Heart left ventricle (tissue), 16 donors: ENCODE measurements at regions of chr22 and their contacts with region 1.

Region 1: DNA sequence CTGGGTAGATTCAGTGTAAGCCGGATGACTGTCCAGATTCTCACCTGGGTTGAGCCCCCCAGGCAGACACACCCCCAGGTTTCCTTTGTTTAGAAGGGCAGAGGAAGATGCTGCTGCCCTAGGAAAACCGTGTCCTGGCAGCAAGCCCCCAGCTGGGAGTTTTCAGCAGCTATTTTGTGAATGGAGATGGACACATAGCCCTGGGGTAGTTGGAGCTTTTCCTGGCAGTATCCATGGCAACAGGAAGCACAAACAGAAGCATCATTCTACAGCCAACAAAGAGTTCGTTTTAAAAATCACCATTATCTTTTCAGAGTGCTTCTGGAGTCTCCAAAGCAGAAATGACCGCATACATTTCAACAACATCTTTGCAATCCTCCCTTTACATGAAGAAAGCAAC is 245.5 kb downstream of the BRD1 start:
- DNase-seq: no peak
- ATAC-seq: no peak
- H3K4me3 ChIP-seq: no peak overlapping the region
- H3K27ac ChIP-seq: no peak overlapping the region
- H3K4me1 ChIP-seq: no peaks in the 10 kb centered on the region
- H3K27me3 ChIP-seq: no peaks in the 10 kb centered on the region
- CTCF ChIP-seq: no peak
- POLR2A ChIP-seq: no peak

Region 2: GRCh38 chr22:49525801-49526535 is 56.2 kb before region 1 on chr22:
- intact Hi-C with region 1: loop called in 1 of 10 experiments (anchors 10 kb)
- DNase-seq: no peak
- ATAC-seq: no peak
- H3K4me3 ChIP-seq: no peak overlapping the region
- H3K27ac ChIP-seq: no peak overlapping the region
- H3K4me1 ChIP-seq: no peaks in the 10 kb centered on the region
- H3K27me3 ChIP-seq: peaks cover 0 to 10% (median 0%) of the 10 kb centered on the region in 9 donors
- CTCF ChIP-seq: no peak
- POLR2A ChIP-seq: no peak